Tibial artery (tissue), 4 donors: ENCODE measurements at regions of chr2 and their contacts with region 1.

Region 1: GRCh38 chr2:159124441-159124911 is 156.0 kb downstream of the TANC1 start:
- DNase-seq: peak in 1 of 2 donors; percentile 38
- H3K4me3 ChIP-seq: no peak overlapping the region
- H3K27ac ChIP-seq: peak overlapping the region; percentile 2 to 23
- H3K4me1 ChIP-seq: peaks cover 0 to 34% (median 15%) of the 10 kb centered on the region in 4 donors
- H3K27me3 ChIP-seq: no peaks in the 10 kb centered on the region
- CTCF ChIP-seq: no peak

Region 2: DNA sequence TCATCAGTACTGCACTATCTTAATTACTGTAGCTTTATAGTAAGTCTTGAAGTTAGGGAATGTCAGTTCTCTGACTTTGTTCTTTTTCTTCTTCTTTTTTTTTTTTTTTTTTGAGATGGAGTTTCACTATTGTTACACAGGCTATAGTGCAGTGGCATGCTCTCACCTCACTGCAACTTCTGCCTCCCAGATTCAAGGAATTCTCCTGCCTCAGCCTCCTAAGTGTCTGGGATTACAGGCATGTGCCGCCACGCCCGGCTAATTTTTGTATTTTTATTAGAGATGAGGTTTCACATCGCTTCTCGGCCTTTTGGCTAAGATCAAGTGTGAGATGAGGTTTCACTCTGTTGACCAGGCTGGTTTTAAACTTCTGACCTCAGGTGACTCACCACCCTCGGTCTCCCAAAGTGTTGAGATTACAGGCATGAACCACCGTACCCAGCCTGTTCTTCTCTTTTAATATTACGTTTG is 198.0 kb before region 1 on chr2:
- intact Hi-C with region 1: no loop called
- DNase-seq: no peak
- H3K4me3 ChIP-seq: no peak overlapping the region
- H3K27ac ChIP-seq: no peak overlapping the region
- H3K4me1 ChIP-seq: peaks cover 0 to 12% (median 1%) of the 10 kb centered on the region in 4 donors
- H3K27me3 ChIP-seq: no peaks in the 10 kb centered on the region
- CTCF ChIP-seq: no peak

Region 3: GRCh38 chr2:159044804-159045286 is 79.6 kb before region 1 on chr2:
- intact Hi-C with region 1: loop called (anchors 5 kb)
- DNase-seq: no peak
- H3K4me3 ChIP-seq: no peak overlapping the region
- H3K27ac ChIP-seq: peak overlapping the region in 1 of 2 donors; percentile 53
- H3K4me1 ChIP-seq: peaks cover 0 to 89% (median 43%) of the 10 kb centered on the region in 4 donors
- H3K27me3 ChIP-seq: no peaks in the 10 kb centered on the region
- CTCF ChIP-seq: no peak

Region 4: GRCh38 chr2:159356053-159356554 is 231.6 kb after region 1 on chr2:
- intact Hi-C with region 1: no loop called
- DNase-seq: no peak
- H3K4me3 ChIP-seq: no peak overlapping the region
- H3K27ac ChIP-seq: no peak overlapping the region
- H3K4me1 ChIP-seq: no peaks in the 10 kb centered on the region
- H3K27me3 ChIP-seq: no peaks in the 10 kb centered on the region
- CTCF ChIP-seq: no peak